Activated CD4-positive, alpha-beta T cell treated with anti-CD3 and anti-CD28 coated beads for 36 hours (primary cell): ENCODE measurements at regions of chr19 and their contacts with region 1.

Region 1: DNA sequence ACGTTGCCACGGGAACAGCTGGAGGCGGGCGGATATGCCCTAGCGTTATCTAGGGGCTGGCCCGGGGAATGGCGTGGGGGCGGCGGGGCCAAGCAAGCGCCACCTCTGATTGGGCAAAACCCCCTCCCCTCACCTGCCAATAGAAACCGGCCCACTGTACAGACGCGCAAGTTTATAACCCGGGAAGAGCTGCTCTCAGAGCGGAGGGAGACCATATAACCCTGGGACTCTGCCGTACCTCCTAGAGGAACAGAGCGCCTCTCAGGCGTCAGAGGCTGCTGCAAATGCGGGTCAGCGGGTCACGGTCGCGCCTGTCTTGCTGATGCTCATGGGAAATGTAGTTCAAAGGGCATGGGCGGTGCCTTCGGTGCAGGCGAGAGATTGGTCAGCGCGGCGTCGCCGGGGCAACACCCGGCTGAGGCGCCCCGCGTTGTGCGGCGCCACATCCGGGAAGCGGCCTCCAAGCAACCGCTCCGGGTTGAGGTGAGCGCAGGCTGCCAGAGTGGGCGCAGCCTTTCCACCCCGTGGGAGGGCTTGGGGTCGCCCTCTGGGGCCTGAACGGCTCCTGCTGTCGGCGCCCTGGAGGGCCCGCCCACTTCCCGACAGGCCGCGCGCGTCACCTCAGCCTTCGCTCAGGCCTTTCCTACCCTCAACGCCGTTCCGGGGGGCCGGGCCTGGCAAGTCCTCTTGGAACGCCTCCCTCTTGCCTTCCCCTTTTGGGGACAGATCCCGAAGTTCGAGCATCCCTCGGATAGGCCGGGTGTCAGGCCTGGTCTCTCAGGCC is at the start of gene ZNF446:
- DNase-seq: peak; percentile 98
- ATAC-seq: peak; percentile 92
- H3K4me3 Mint-ChIP-seq: peak within 1 kb of the TSS; percentile 83
- H3K27ac Mint-ChIP-seq: peak within 1 kb of the TSS; percentile 96
- H3K4me1 Mint-ChIP-seq: peaks cover 14% of the 10 kb centered on the region
- H3K27me3 Mint-ChIP-seq: no peaks in the 10 kb centered on the region
- total RNA-seq, gene ZNF446: 4.2 to 4.7 TPM

Region 2: DNA sequence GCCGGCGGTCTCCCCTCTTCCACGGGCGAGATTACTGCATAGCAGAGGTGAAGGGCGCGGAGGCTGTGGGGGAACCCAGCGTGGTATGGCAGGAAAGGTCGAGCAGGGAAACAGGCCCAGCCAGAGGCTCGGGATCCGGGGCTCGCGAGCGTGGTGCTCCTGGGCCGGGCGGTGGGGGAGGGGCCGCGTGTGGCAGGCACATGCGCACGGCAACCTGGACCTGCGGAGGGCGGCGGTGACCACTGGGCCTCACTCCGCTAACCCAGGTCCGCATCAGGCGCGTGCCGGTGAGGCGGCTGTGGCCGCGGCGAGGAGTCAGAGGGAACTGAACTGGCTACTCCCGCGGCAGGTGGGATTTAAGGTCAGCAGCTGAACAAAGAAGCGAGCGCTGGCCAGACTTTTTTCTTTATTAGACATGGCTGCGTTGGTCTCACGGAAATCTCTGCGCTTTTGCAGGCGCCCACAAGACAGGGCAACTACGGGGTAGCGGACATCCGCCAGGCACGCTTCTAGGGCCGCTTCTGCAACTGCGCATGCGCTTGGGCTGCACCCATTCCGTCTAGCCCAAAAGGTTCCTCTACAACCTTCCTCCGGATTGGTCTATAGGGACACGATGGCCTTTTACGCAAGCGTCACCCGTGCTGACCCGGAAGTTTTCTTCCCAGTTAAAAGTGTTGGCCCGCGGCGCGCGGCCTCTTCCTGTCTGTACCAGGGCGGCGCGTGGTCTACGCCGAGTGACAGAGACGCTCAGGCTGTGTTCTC is 89.1 kb before region 1 on chr19 and contains the start of gene RPS5:
- CTCF ChIA-PET with region 1: no interaction called
- POLR2A ChIA-PET with region 1: no interaction called
- intact Hi-C with region 1: loop called (anchors 1 to 5 kb)
- DNase-seq: peak; percentile 97
- ATAC-seq: peak; percentile 96
- H3K4me3 Mint-ChIP-seq: peak within 1 kb of the TSS; percentile 96
- H3K27ac Mint-ChIP-seq: peak within 1 kb of the TSS; percentile 97
- H3K4me1 Mint-ChIP-seq: peaks cover 33% of the 10 kb centered on the region
- H3K27me3 Mint-ChIP-seq: no peaks in the 10 kb centered on the region
- total RNA-seq, gene RPS5: 1,234 to 1,535 TPM

Region 3: GRCh38 chr19:58408152-58409009 is 67.5 kb before region 1 on chr19 and contains the start of gene ZNF584:
- CTCF ChIA-PET with region 1: no interaction called
- POLR2A ChIA-PET with region 1: no interaction called
- intact Hi-C with region 1: loop called (anchors 1 to 5 kb)
- DNase-seq: peak; percentile 97
- ATAC-seq: peak; percentile 97
- H3K4me3 Mint-ChIP-seq: peak within 1 kb of the TSS; percentile 84
- H3K27ac Mint-ChIP-seq: peak within 1 kb of the TSS; percentile 92
- H3K4me1 Mint-ChIP-seq: peaks cover 29% of the 10 kb centered on the region
- H3K27me3 Mint-ChIP-seq: no peaks in the 10 kb centered on the region
- total RNA-seq, gene ZNF584: 9.9 to 11.2 TPM

Region 4: DNA sequence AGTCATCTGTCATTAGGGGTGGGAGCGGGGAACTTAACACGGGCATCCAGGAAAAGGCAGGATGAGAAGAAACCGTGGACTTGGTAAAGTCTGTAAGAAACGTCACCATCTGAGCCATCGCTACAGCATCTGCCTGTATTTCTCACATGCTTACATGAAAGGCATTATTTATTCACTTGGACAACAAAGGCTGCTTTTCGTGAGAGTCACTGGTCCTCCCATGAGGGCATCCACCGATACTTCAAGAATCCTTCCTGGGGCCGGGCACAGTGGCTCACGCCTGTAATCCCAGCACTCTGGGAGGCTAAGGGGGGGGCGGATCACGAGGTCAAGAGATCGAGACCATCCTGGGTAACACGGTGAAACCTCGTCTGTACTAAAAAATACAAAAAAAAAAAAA is 16.4 kb after region 1 on chr19:
- CTCF ChIA-PET with region 1: interaction called, 4 read pairs
- POLR2A ChIA-PET with region 1: interaction called, 7 read pairs
- intact Hi-C with region 1: loop called (anchors 1 to 2 kb)
- DNase-seq: no peak
- ATAC-seq: no peak
- H3K4me3 Mint-ChIP-seq: no peak overlapping the region
- H3K27ac Mint-ChIP-seq: no peak overlapping the region
- H3K4me1 Mint-ChIP-seq: peaks cover 7% of the 10 kb centered on the region
- H3K27me3 Mint-ChIP-seq: no peaks in the 10 kb centered on the region

Region 5: DNA sequence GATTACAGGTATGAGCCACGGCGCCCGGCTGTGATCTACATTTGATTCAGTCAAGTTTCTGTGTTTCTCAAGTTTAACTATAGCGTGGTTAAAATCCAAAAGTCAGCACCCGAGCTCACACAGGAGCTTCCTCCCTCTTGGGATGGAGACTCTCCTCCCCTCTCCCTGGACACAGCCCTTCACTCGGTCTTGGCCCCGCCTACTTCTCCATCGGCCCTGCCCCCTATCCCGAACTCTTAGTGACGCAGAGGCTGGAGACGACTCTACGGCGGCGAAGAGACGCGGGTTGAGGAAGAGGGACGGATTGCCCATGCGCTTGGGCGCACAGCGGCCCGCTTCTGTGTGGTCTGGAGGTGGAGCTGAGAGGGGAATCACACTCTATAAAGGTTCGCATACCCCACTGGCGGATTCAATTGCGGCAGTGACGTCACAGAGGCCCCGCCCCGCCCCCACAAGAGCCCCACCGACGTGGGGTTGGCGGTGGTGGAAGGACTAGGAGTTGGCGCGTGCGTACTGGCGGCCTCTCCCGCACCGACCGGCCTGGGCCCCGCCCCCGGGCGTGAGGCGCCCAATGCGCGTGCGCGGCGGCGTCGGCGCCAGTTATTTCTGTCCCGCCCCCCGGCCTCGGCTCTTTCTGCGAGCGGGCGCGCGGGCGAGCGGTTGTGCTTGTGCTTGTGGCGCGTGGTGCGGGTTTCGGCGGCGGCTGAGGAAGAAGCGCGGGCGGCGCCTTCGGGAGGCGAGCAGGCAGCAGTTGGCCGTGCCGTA is 68.1 kb after region 1 on chr19 and contains the start of gene TRIM28:
- CTCF ChIA-PET with region 1: no interaction called
- POLR2A ChIA-PET with region 1: no interaction called
- intact Hi-C with region 1: loop called in 1 of 2 experiments (anchors 1 kb)
- DNase-seq: peak; percentile 100
- ATAC-seq: peak; percentile 98
- H3K4me3 Mint-ChIP-seq: peak within 1 kb of the TSS; percentile 96
- H3K27ac Mint-ChIP-seq: peak within 1 kb of the TSS; percentile 97
- H3K4me1 Mint-ChIP-seq: peaks cover 34% of the 10 kb centered on the region
- H3K27me3 Mint-ChIP-seq: peaks cover 4% of the 10 kb centered on the region
- total RNA-seq, gene TRIM28: 481 to 758 TPM

Region 6: GRCh38 chr19:58572818-58573657 is 97.1 kb after region 1 on chr19 and contains the start of gene MZF1:
- CTCF ChIA-PET with region 1: no interaction called
- POLR2A ChIA-PET with region 1: no interaction called
- intact Hi-C with region 1: loop called (anchors 1 kb)
- DNase-seq: peak; percentile 100
- ATAC-seq: peak; percentile 69
- H3K4me3 Mint-ChIP-seq: peak within 1 kb of the TSS; percentile 95
- H3K27ac Mint-ChIP-seq: peak within 1 kb of the TSS; percentile 100
- H3K4me1 Mint-ChIP-seq: peaks cover 38% of the 10 kb centered on the region
- H3K27me3 Mint-ChIP-seq: no peaks in the 10 kb centered on the region
- total RNA-seq, gene MZF1: 14.3 to 15.0 TPM